ENCODE measurements at regions of chr17 and their contacts with region 1.

Region 1: GRCh38 chr17:78497115-78497540 is 80.1 kb downstream of the DNAH17 start:
- DNase-seq: peak; percentile 88

Region 2: GRCh38 chr17:78468366-78468765 is 28.8 kb before region 1 on chr17:
- intact Hi-C with region 1: loop called in 1 of 2 experiments (anchors 1 kb)
- DNase-seq: no peak

Region 3: DNA sequence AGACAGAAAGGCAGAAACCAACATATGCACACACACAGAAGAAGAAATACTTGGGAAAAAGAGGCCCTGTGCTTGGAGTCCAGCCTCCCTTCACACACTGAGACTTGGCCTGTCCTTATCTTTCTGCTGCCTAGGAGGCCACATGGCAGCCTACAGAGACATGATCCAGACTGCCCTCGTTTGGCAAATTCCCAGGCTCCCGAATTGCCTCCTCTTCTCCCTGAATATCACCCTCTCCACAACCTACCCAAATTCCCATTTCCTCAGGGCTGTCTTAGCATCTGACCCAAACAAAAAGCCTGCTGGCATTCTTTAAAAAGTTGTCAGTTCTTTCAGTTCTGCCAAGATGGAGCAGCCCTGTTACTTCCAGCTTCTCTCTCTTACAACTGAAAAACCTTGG is 20.3 kb after region 1 on chr17:
- intact Hi-C with region 1: no loop called
- DNase-seq: no peak

Region 4: GRCh38 chr17:78708510-78708973 is 211.4 kb after region 1 on chr17:
- intact Hi-C with region 1: loop called (anchors 5 kb)
- DNase-seq: peak; percentile 91

Measured in posterior vena cava (tissue), 2 donors.